OCI-LY7 (cell line): ENCODE measurements at regions of chr2 and their contacts with region 1.

Region 1: GRCh38 chr2:69914170-69914960 is 544 bp upstream of the MXD1 start:
- DNase-seq: peak; percentile 100
- H3K4me3 ChIP-seq: peak overlapping the region; percentile 91
- H3K27ac ChIP-seq: peak overlapping the region; percentile 58
- H3K4me1 ChIP-seq: peaks cover 40% of the 10 kb centered on the region
- CTCF ChIP-seq: peak; percentile 50; the same call in 1 of the 2 replicates

Region 2: DNA sequence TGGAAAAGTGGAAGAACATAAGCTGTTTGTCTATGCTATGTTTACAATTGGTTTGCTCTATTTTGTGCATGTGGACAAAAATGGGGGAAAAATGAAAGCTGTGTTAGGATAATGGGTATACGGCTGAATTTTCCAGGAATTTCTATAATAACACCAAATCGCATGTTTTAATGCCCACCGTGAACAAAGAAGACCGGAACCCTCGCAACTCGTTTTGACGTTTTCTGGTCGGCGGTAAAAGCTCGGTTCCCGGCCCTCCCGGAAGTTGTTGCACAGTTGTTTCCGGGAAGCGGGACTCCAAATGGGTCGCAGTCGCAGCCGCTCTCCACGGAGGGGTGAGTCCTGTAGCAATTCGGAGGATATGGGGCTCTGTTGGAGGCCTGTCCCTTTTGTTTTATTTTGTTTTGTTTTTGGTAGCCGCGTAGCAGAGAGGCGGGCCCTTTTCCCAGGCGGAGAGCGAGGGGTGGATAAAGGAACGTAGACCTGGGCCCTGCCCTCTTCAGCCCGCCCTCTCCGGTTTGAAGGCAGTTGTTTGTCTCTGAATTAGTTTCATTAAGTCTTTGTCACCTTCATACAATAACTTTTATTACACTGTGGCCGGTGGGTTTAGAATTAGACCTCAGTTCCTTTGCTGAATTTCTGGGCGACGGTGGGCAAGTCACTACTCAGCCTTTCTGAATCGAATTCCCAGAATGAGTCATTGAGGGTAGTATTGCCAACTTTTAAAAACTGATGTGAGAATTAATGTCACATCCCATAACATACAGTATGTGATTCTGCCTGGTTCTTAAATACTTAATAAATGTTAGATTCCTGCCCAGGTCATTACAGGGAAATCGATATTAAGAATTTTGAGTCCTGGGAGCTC is 20.4 kb before region 1 on chr2 and contains the start of gene SNRNP27:
- CTCF ChIA-PET with region 1: interaction called, 4 read pairs
- POLR2A ChIA-PET with region 1: interaction called, 13 read pairs
- intact Hi-C with region 1: no loop called
- DNase-seq: peak; percentile 89
- H3K4me3 ChIP-seq: peak within 1 kb of the TSS; percentile 85
- H3K27ac ChIP-seq: peak within 1 kb of the TSS; percentile 16
- H3K4me1 ChIP-seq: peaks cover 13% of the 10 kb centered on the region
- CTCF ChIP-seq: no peak
- total RNA-seq, gene SNRNP27: 42.2 and 61.9 TPM in 2 replicates

Region 3: GRCh38 chr2:70132244-70133126 is 218.1 kb after region 1 on chr2:
- CTCF ChIA-PET with region 1: no interaction called
- POLR2A ChIA-PET with region 1: interaction called, 11 read pairs
- intact Hi-C with region 1: no loop called
- DNase-seq: peak; percentile 73
- H3K4me3 ChIP-seq: peak overlapping the region; percentile 67
- H3K27ac ChIP-seq: peak overlapping the region; percentile 93
- H3K4me1 ChIP-seq: peaks cover 80% of the 10 kb centered on the region
- CTCF ChIP-seq: 0 out of 2 replicates have a peak, but pooled peaks have one; percentile 22

Region 4: GRCh38 chr2:70190418-70191243 is 276.3 kb after region 1 on chr2 and contains the start of gene C2orf42:
- CTCF ChIA-PET with region 1: no interaction called
- POLR2A ChIA-PET with region 1: interaction called, 6 read pairs
- intact Hi-C with region 1: loop called (anchors 2 kb)
- DNase-seq: peak; percentile 99
- H3K4me3 ChIP-seq: peak within 1 kb of the TSS; percentile 83
- H3K27ac ChIP-seq: peak within 1 kb of the TSS; percentile 89
- H3K4me1 ChIP-seq: peaks cover 8% of the 10 kb centered on the region
- CTCF ChIP-seq: no peak; the same call in 1 of the 2 replicates
- total RNA-seq, gene C2orf42: 24.5 and 26.8 TPM in 2 replicates

Region 5: GRCh38 chr2:70301344-70302194 is 387.2 kb after region 1 on chr2 and contains the start of gene FAM136A:
- CTCF ChIA-PET with region 1: interaction called, 6 read pairs
- POLR2A ChIA-PET with region 1: no interaction called
- intact Hi-C with region 1: loop called (anchors 1 kb)
- DNase-seq: peak; percentile 90
- H3K4me3 ChIP-seq: peak within 1 kb of the TSS; percentile 84
- H3K27ac ChIP-seq: peak within 1 kb of the TSS; percentile 54
- H3K4me1 ChIP-seq: peaks cover 8% of the 10 kb centered on the region
- CTCF ChIP-seq: peak; percentile 82
- total RNA-seq, gene FAM136A: 57.2 and 71.0 TPM in 2 replicates